Heart left ventricle (tissue), 16 donors: ENCODE measurements at regions of chr2 and their contacts with region 1.

Region 1: DNA sequence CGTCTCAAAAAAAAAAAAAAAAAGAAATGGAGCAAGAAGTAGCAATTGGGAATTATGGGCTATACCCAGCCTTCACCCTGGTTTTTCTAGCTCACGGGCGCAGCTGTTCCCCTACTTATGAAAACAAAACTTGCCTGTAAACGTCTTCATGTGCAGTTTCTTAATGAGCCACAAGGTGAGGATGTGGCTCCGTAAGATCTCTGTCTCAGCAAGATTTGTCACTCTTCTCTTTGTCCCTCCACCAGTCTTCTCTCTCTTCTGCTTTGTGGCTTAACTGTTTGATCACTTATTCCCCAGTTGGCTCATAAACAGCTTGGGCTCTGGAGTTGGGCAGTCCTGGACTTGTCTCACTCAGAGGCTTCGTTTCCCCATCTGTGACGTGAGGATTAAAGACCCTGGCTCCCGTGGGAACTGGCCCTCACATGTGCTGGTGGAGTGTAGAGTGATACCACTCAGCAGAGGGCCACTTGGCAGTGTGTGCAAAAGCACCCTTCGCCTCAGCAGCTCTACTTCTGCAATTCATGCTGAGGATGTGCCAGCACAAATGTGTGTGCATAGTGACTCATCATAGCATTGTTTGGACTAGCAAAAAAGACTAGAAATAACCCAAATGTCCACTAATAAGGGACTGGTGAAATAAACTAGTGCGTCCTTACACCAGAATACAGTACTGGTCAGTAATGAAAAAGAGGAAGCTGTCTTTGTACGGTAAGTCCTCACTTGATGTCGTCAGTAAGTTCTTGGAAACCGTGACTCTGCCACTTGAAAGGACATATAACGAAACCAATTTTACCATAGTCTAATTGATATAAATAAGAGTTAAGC is 8.7 kb downstream of the CEP68 start:
- DNase-seq: peak in 4 of 5 donors; percentile 45 to 79 (median 66)
- ATAC-seq: peak; percentile 78 to 85 (median 82)
- H3K4me3 ChIP-seq: peak overlapping the region in 1 of 12 donors; percentile 12
- H3K27ac ChIP-seq: peak overlapping the region in 11 of 12 donors; percentile 6 to 87 (median 39)
- H3K4me1 ChIP-seq: peaks cover 10 to 99% (median 79%) of the 10 kb centered on the region in 12 donors
- H3K27me3 ChIP-seq: no peaks in the 10 kb centered on the region
- CTCF ChIP-seq: peak; percentile 59 to 79 (median 70)
- POLR2A ChIP-seq: no peak

Region 2: DNA sequence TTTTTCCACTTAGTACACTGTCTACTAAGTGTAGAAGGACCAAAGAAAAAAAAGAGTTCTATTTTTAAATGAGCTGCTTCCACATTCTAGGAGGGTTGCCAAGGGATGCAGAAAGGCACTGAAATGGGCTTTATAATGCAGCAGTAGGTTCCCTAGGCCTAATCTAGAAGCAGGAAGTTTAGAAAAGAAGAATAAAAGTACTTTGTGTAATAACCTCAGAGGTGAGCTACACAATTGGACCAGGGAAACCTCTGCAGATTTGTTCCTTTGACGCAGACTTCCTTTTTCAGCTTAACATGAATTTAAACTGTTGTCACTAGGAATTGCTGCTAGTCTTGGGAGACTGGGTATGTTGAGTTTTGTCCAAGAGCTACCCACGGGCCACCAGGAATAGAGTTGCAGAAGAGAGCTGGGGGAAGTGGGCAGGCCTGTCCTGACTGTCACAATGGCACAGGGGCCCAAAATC is 99.5 kb after region 1 on chr2:
- intact Hi-C with region 1: loop called in 7 of 10 experiments (anchors 2 to 10 kb)
- DNase-seq: peak in 2 of 5 donors; percentile 38 to 40
- ATAC-seq: peak; percentile 76 to 93 (median 85)
- H3K4me3 ChIP-seq: no peak overlapping the region
- H3K27ac ChIP-seq: peak overlapping the region in 10 of 12 donors; percentile 26 to 78 (median 60)
- H3K4me1 ChIP-seq: peaks cover 0 to 41% (median 16%) of the 10 kb centered on the region in 12 donors
- H3K27me3 ChIP-seq: no peaks in the 10 kb centered on the region
- CTCF ChIP-seq: no peak
- POLR2A ChIP-seq: no peak

Region 3: DNA sequence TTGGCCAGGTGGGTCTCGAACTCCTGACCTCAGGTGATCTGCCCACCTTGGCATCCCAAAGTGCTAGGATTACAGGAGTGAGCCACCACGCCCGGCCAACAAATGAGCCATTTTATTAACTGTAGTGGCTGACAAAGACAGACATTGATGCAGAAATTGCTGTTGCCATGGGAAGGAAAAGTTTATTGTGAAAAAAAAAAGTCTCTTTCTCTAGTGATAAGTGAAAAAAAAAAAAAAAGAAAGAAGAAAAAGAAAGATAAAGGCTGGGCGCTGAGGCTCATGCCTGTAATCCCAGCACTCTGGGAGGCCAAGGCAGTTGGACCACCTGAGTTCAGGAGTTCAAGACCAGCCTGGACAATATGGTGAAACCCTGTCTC is 104.8 kb after region 1 on chr2:
- intact Hi-C with region 1: loop called in 8 of 10 experiments (anchors 2 to 10 kb)
- DNase-seq: no peak
- ATAC-seq: no peak
- H3K4me3 ChIP-seq: no peak overlapping the region
- H3K27ac ChIP-seq: no peak overlapping the region
- H3K4me1 ChIP-seq: peaks cover 0 to 15% (median 3%) of the 10 kb centered on the region in 12 donors
- H3K27me3 ChIP-seq: no peaks in the 10 kb centered on the region
- CTCF ChIP-seq: no peak
- POLR2A ChIP-seq: no peak

Region 4: DNA sequence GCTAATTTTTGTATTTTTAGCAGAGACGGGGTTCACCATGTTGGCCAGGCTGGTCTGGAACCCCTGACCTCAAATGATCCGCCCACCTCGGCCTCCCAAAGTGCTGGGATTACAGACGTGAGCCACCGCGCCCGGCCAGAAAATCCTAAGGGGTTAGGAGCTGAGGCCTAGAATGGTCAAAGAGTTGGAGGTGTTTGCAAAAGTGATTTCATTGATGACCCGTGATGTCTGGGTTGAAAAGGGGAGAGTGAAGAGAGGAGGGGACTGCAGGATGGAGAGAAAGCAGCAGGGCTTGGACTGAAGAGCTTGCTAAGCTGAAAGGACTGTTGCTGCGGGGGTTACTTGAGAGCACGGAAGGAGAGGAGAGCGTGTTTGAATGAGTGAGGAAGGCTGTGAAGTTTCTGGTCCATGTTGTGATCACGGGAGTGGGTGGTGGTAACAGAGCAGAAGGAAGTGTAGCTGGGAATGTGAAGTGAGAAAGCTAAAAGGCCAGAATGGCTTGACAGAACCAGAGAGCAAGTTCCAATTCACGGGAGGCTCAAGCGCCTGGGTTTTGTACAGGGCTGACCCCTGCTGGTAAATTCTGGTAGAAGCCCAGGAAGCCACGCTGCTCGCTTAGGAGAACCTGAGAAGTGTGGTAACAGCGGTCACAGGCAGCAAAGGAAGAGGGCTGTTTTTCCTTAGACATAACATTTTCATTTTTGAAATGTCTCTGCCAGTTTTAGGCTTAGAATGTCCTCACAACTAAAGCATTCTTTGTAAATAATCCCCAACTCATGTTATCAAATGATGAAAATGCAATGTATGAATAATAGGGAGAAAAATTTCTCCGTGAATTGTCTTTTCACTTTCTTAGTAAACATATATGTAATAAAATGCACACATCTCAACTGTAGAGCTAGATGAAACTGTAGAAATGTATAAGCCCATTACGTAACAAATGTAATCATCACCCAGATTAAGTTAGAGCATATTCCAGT is 122.2 kb after region 1 on chr2:
- intact Hi-C with region 1: loop called in 7 of 10 experiments (anchors 5 kb)
- DNase-seq: peak; percentile 65 to 77 (median 74)
- ATAC-seq: peak; percentile 66 to 98 (median 94)
- H3K4me3 ChIP-seq: no peak overlapping the region
- H3K27ac ChIP-seq: no peak overlapping the region
- H3K4me1 ChIP-seq: peaks cover 0 to 7% (median 0%) of the 10 kb centered on the region in 12 donors
- H3K27me3 ChIP-seq: no peaks in the 10 kb centered on the region
- CTCF ChIP-seq: peak; percentile 73 to 94 (median 80)
- POLR2A ChIP-seq: no peak

Region 5: GRCh38 chr2:65227425-65228262 is 162.7 kb after region 1 on chr2 and contains the start of gene ACTR2:
- intact Hi-C with region 1: loop called in 1 of 10 experiments (anchors 5 kb)
- DNase-seq: peak; percentile 97 to 98 (median 98)
- ATAC-seq: peak; percentile 97 to 100 (median 99)
- H3K4me3 ChIP-seq: peak within 1 kb of the TSS; percentile 68 to 100 (median 94)
- H3K27ac ChIP-seq: peak within 1 kb of the TSS; percentile 89 to 100 (median 98)
- H3K4me1 ChIP-seq: peaks cover 6 to 52% (median 31%) of the 10 kb centered on the region in 12 donors
- H3K27me3 ChIP-seq: no peaks in the 10 kb centered on the region
- CTCF ChIP-seq: no peak
- POLR2A ChIP-seq: peak in 1 of 2 donors; percentile 59
- total RNA-seq, gene ACTR2: 32.6 to 216 (median 117) TPM

Region 6: GRCh38 chr2:65566620-65567019 is 501.7 kb after region 1 on chr2:
- intact Hi-C with region 1: loop called in 4 of 10 experiments (anchors 5 to 10 kb)
- DNase-seq: no peak
- ATAC-seq: no peak
- H3K4me3 ChIP-seq: peak overlapping the region in 2 of 12 donors; percentile 9 to 24
- H3K27ac ChIP-seq: no peak overlapping the region
- H3K4me1 ChIP-seq: no peaks in the 10 kb centered on the region
- H3K27me3 ChIP-seq: no peaks in the 10 kb centered on the region
- CTCF ChIP-seq: no peak
- POLR2A ChIP-seq: no peak

Region 7: GRCh38 chr2:65576861-65577601 is 512.1 kb after region 1 on chr2:
- intact Hi-C with region 1: loop called in 2 of 10 experiments (anchors 10 kb)
- DNase-seq: no peak
- ATAC-seq: peak in 1 of 4 donors; percentile 54
- H3K4me3 ChIP-seq: no peak overlapping the region
- H3K27ac ChIP-seq: no peak overlapping the region
- H3K4me1 ChIP-seq: peaks cover 0 to 17% (median 4%) of the 10 kb centered on the region in 12 donors
- H3K27me3 ChIP-seq: no peaks in the 10 kb centered on the region
- CTCF ChIP-seq: no peak
- POLR2A ChIP-seq: no peak